RWPE1 (cell line): ENCODE measurements at regions of chr14 and their contacts with region 1.

Region 1: DNA sequence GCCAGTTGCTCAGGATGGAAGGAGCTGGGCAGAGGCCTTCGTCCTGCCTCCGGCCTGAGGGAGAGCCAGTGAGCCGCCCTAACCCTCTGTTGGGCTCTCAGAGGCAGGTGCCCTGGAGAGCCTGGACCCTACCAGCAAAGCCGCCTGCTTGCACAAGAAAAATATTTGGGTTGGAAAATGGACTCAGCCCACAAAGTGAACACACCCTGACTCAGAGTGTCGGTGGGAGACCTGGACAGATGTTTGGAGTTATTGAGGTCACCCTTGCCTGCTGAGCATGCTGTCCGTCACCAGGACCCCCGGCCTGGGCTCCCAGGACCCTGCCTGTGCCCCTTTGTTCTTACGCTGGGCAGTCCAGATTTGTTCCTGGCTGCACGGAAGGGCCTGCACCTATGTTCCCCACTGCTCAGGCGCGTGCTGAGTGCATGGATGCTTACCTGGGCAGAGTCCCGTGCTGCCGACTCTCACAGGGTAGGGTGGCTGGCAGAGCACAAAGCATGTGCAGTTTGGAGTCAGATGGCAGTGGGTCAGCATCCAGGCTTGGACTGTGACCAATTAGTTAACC is 22.4 kb downstream of the FAM181A start:
- DNase-seq: no peak
- H3K27ac ChIP-seq: no peak overlapping the region
- CTCF ChIP-seq: no peak

Region 2: GRCh38 chr14:93962701-93963601 is 13.4 kb after region 1 on chr14:
- CTCF ChIA-PET with region 1: interaction called, 5 read pairs
- POLR2A ChIA-PET with region 1: interaction called, 16 read pairs
- DNase-seq: no peak
- H3K27ac ChIP-seq: no peak overlapping the region
- CTCF ChIP-seq: no peak